Cardiac septum (tissue), 1 donor: ENCODE measurements at regions of chr19 and their contacts with region 1.

Region 1: GRCh38 chr19:734716-735115 is 16.2 kb upstream of the MISP start:
- DNase-seq: no peak

Region 2: DNA sequence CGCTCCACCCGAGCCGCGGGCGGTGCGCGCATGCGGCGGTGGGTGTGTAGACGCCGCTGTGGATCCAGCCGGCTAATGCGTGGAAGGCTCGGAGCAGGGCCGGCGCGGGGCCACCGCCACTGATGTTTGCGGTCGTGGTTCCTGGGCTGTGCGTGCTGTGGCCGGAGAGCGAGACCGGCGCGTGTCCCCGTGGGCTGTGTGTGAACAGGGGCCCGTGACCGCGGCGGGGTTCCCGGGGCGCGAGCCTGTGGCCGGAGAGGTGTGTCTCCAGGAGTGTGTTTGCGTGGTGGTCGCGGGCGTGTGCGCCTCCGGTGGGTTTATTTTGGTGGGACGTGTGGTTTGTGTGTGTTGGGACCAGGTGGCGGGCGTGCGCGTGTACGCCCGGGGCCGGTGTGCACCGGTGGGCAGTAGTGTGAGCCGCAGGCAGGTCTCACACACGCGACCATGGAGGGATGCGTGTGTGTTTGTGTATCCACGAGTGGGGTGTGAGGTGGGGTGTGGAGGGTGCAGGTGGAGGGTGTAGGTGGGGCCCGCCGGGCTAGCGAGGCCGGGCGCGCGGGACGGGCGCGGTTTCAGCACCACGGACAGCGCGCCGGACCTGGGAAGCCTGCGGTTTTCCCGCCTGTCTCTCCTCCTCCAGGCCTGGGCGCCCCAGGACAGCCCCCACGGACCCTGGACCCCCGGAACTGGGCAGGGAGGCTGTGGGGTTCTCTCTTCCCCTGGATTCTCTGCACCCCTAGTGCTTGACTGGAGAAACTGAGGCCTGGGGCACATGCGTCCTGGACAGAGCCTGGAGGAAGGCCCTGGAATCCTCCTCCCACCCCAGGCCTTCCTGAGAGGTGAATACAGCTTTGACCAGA is 143.4 kb before region 1 on chr19:
- intact Hi-C with region 1: no loop called
- DNase-seq: no peak

Region 3: GRCh38 chr19:662962-663681 is 71.6 kb before region 1 on chr19 and contains the start of gene RNF126:
- intact Hi-C with region 1: loop called (anchors 2 kb)
- DNase-seq: peak; percentile 97
- total RNA-seq, gene RNF126: 31.4 TPM

Region 4: GRCh38 chr19:1094975-1095701 is 360.4 kb after region 1 on chr19 and contains the start of gene POLR2E:
- intact Hi-C with region 1: no loop called
- DNase-seq: peak; percentile 100
- total RNA-seq, gene POLR2E: 125 TPM